Adrenal gland (tissue), 19 donors: ENCODE measurements at regions of chr12 and their contacts with region 1.

Region 1: GRCh38 chr12:109995686-109996482 is at the start of gene GIT2:
- DNase-seq: peak; percentile 93 to 97 (median 95)
- H3K4me3 ChIP-seq: peak within 1 kb of the TSS; percentile 48 to 92 (median 75)
- H3K27ac ChIP-seq: peak within 1 kb of the TSS; percentile 58 to 96 (median 93)
- H3K4me1 ChIP-seq: peaks cover 16 to 45% of the 10 kb centered on the region in 2 donors
- H3K27me3 ChIP-seq: no peaks in the 10 kb centered on the region
- CTCF ChIP-seq: peak in 1 of 6 experiments; percentile 6
- POLR2A ChIP-seq: peak; percentile 80 to 94
- total RNA-seq, gene GIT2: 35.9 to 80.9 (median 57.9) TPM

Region 2: GRCh38 chr12:110039085-110039807 is 43.4 kb after region 1 on chr12:
- intact Hi-C with region 1: loop called in 1 of 2 experiments (anchors 5 kb)
- DNase-seq: peak in 5 of 7 donors; percentile 37 to 59 (median 51)
- H3K4me3 ChIP-seq: no peak overlapping the region
- H3K27ac ChIP-seq: peak overlapping the region; percentile 60 to 93 (median 71)
- H3K4me1 ChIP-seq: peaks cover 14 to 20% of the 10 kb centered on the region in 2 donors
- H3K27me3 ChIP-seq: no peaks in the 10 kb centered on the region
- CTCF ChIP-seq: no peak
- POLR2A ChIP-seq: peak in 1 of 2 donors; percentile 18